Activated CD4-positive, alpha-beta T cell treated with anti-CD3 and anti-CD28 coated beads, Interleukin-2, amount 10 ng/mL, durations not matched to agents 24 days and 14 days (primary cell): ENCODE measurements at regions of chr21 and their contacts with region 1.

Region 1: DNA sequence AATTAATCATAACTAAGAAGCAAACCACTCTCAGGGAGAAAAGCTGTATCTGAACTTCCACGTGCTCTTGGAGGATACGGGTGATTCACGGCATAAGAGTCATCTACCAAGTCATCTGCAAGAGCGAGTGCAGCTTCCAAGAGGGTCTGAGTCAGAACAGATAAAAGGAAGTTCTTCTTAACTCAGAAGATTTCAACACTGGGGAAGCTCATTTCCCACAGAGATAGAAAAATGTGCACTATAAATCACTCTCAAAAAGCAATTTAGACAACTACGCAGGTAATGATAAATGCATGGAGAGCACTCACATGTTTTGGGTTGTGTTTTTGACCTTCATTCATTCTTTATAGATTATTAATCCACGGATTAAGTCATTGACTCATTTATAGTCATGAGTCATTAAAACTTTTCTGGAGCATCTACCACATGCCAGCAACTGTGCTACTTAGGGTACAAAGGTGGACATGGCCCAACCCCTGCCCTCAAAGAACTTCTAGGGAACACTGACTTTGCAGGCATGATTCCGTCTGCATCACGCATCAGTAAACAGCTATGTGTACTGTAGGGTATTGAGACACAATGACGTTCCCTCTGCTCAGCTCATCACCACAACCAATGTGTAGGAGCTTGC is 20.8 kb downstream of the KCNJ15 start:
- DNase-seq: no peak
- H3K4me3 Mint-ChIP-seq: no peak overlapping the region
- H3K27ac Mint-ChIP-seq: peak overlapping the region; percentile 5
- H3K4me1 Mint-ChIP-seq: peaks cover 10% of the 10 kb centered on the region
- H3K27me3 Mint-ChIP-seq: peaks cover 2% of the 10 kb centered on the region

Region 2: GRCh38 chr21:38219049-38219628 is 58.5 kb before region 1 on chr21:
- intact Hi-C with region 1: loop called (anchors 5 kb)
- DNase-seq: peak; percentile 89
- H3K4me3 Mint-ChIP-seq: no peak overlapping the region
- H3K27ac Mint-ChIP-seq: no peak overlapping the region
- H3K4me1 Mint-ChIP-seq: peaks cover 3% of the 10 kb centered on the region
- H3K27me3 Mint-ChIP-seq: no peaks in the 10 kb centered on the region

Region 3: GRCh38 chr21:38244885-38245545 is 32.6 kb before region 1 on chr21:
- intact Hi-C with region 1: loop called (anchors 2 kb)
- DNase-seq: peak; percentile 88
- H3K4me3 Mint-ChIP-seq: peak overlapping the region; percentile 38
- H3K27ac Mint-ChIP-seq: peak overlapping the region; percentile 89
- H3K4me1 Mint-ChIP-seq: peaks cover 30% of the 10 kb centered on the region
- H3K27me3 Mint-ChIP-seq: peaks cover 7% of the 10 kb centered on the region

Region 4: GRCh38 chr21:38306433-38307141 is 29.0 kb after region 1 on chr21:
- intact Hi-C with region 1: no loop called
- DNase-seq: no peak
- H3K4me3 Mint-ChIP-seq: no peak overlapping the region
- H3K27ac Mint-ChIP-seq: peak overlapping the region; percentile 22
- H3K4me1 Mint-ChIP-seq: peaks cover 9% of the 10 kb centered on the region
- H3K27me3 Mint-ChIP-seq: no peaks in the 10 kb centered on the region